Activated CD4-positive, alpha-beta memory T cell treated with anti-CD3 and anti-CD28 coated beads, Interleukin-2, amount 10 ng/mL, durations not matched to agents 7 days and 5 days (primary cell): ENCODE measurements at regions of chr16 and their contacts with region 1.

Region 1: DNA sequence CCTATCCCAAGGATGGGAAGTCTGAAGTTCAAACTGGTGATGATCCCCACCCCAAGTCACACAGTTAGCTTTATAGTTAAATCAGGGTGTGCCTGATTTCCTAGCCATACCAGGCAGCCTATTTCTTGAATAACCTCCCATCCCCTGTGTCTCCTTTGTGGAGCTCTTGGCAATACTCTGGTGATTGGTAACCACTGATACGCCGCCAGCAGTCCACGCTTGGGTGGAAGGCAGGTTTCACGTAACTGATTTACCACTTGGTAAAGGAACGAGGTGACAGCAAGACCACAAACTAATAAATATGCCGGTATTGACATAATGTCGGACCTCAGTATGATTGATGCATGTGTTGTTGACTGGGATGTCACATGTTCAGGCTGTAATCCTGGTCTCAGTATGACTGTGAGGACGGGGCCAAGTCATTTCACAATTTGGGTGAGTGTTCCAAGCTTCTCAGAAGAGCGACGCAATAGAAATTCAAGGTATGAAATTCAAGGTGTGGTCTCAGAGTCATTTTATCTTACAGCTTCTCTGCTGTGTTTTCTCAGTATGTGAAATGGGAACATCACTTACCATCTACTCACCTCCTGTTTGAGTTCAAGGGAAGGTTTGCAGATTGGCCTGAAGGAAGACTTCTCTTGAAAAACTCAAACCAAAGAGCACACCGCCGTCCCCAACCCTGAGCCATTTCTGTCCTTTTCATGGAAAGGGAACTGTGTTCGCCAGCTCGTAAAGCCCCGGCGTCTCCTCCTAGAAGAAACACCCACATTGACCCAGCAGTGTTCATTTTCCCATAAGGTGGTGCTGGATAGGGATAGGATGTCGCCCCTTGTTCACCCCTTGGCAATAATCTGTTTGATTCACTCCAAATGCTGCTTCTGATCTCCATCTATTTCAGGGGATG is 678.9 kb downstream of the WWOX start:
- DNase-seq: peak; percentile 84
- H3K4me3 Mint-ChIP-seq: peak overlapping the region; percentile 58
- H3K27ac Mint-ChIP-seq: peak overlapping the region; percentile 98
- H3K4me1 Mint-ChIP-seq: peaks cover 95% of the 10 kb centered on the region
- H3K27me3 Mint-ChIP-seq: no peaks in the 10 kb centered on the region

Region 2: GRCh38 chr16:78684040-78684611 is 94.2 kb before region 1 on chr16:
- CTCF ChIA-PET with region 1: no interaction called
- POLR2A ChIA-PET with region 1: no interaction called
- DNase-seq: no peak
- H3K4me3 Mint-ChIP-seq: no peak overlapping the region
- H3K27ac Mint-ChIP-seq: no peak overlapping the region
- H3K4me1 Mint-ChIP-seq: no peaks in the 10 kb centered on the region
- H3K27me3 Mint-ChIP-seq: no peaks in the 10 kb centered on the region

Region 3: DNA sequence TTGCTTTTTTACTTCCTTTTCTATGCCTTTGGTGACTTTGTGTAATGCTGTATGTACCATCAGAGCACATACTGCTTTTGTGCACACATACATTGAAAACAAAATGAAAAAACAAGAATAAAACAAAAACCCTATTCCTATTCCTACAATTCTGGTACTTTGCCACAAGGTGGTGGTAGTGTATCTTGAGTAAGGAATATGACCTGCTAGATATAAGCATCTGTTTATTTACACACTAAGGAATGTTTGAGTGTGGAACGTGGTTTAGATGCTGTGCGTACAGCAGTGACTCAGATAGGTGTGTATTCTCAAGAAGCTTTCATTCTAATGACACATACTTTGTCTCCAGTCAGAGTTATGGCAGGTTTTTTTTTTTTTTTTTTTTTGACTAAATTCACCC is 72.7 kb before region 1 on chr16:
- CTCF ChIA-PET with region 1: interaction called, 50 read pairs
- POLR2A ChIA-PET with region 1: interaction called, 6 read pairs
- DNase-seq: peak; percentile 27
- H3K4me3 Mint-ChIP-seq: no peak overlapping the region
- H3K27ac Mint-ChIP-seq: peak overlapping the region; percentile 41
- H3K4me1 Mint-ChIP-seq: peaks cover 13% of the 10 kb centered on the region
- H3K27me3 Mint-ChIP-seq: no peaks in the 10 kb centered on the region

Region 4: DNA sequence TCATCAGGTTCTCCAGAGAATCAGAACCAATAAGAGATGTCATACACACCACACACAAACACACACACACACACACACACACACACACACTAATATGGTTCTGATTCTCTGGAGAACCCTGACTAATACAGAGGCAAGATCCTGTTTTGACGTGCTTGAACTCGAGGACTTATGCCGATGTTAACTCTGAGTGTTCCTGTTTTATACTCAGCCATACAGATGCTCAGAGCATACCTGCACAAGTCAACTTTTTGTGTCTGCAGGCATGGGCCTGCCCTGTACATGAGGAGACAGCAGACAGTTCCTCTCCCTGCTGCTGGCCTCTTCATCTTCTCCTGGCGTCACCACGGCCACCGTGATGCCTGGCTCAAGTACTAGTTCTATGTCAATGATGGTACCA is 43.0 kb before region 1 on chr16:
- CTCF ChIA-PET with region 1: no interaction called
- POLR2A ChIA-PET with region 1: no interaction called
- DNase-seq: no peak
- H3K4me3 Mint-ChIP-seq: no peak overlapping the region
- H3K27ac Mint-ChIP-seq: no peak overlapping the region
- H3K4me1 Mint-ChIP-seq: peaks cover 6% of the 10 kb centered on the region
- H3K27me3 Mint-ChIP-seq: no peaks in the 10 kb centered on the region

Region 5: GRCh38 chr16:78749745-78750268 is 28.5 kb before region 1 on chr16:
- CTCF ChIA-PET with region 1: no interaction called
- POLR2A ChIA-PET with region 1: interaction called, 11 read pairs
- DNase-seq: no peak
- H3K4me3 Mint-ChIP-seq: peak overlapping the region; percentile 11
- H3K27ac Mint-ChIP-seq: peak overlapping the region; percentile 63
- H3K4me1 Mint-ChIP-seq: peaks cover 27% of the 10 kb centered on the region
- H3K27me3 Mint-ChIP-seq: no peaks in the 10 kb centered on the region

Region 6: DNA sequence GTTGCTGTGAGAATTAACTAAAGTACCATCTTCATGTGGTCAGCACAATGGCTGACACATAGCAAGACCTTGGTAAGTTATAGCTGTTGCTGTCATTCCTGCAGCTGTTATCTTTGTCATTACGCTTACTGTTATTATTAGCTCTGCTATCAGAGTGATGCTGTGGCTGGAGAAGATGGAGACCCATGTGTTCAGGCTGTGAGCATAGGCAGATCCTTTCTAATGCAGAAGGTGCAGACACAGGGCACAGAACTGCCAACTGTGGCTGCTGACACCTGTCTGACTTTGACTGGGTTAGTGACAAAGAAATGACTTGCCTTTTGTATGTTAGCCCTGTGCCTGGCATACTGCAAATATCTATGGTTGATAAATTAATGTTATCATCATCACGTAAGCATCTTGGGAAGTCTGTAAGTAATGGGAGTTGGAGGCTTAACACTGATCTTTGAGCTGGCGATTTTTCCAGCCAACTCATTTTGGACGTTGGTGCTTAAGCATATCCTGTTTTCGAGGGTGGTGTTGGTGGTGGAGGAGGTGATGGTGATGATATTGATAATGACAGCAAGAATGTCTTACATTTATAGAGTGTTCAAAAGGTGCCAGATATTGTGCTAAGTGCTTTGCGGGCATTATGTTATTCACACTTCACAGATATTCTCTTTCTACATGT is 16.4 kb after region 1 on chr16:
- CTCF ChIA-PET with region 1: interaction called, 10 read pairs
- POLR2A ChIA-PET with region 1: interaction called, 66 read pairs
- DNase-seq: peak; percentile 46
- H3K4me3 Mint-ChIP-seq: peak overlapping the region; percentile 2
- H3K27ac Mint-ChIP-seq: peak overlapping the region; percentile 85
- H3K4me1 Mint-ChIP-seq: peaks cover 64% of the 10 kb centered on the region
- H3K27me3 Mint-ChIP-seq: no peaks in the 10 kb centered on the region

Region 7: GRCh38 chr16:78892951-78893733 is 114.8 kb after region 1 on chr16:
- CTCF ChIA-PET with region 1: interaction called, 4 read pairs
- POLR2A ChIA-PET with region 1: interaction called, 121 read pairs
- DNase-seq: no peak
- H3K4me3 Mint-ChIP-seq: no peak overlapping the region
- H3K27ac Mint-ChIP-seq: peak overlapping the region; percentile 85
- H3K4me1 Mint-ChIP-seq: peaks cover 91% of the 10 kb centered on the region
- H3K27me3 Mint-ChIP-seq: no peaks in the 10 kb centered on the region

Region 8: GRCh38 chr16:78925083-78925767 is 146.9 kb after region 1 on chr16:
- CTCF ChIA-PET with region 1: no interaction called
- POLR2A ChIA-PET with region 1: no interaction called
- DNase-seq: peak; percentile 29
- H3K4me3 Mint-ChIP-seq: no peak overlapping the region
- H3K27ac Mint-ChIP-seq: no peak overlapping the region
- H3K4me1 Mint-ChIP-seq: peaks cover 11% of the 10 kb centered on the region
- H3K27me3 Mint-ChIP-seq: no peaks in the 10 kb centered on the region

Region 9: GRCh38 chr16:78962457-78962929 is 184.1 kb after region 1 on chr16:
- CTCF ChIA-PET with region 1: no interaction called
- POLR2A ChIA-PET with region 1: interaction called, 16 read pairs
- DNase-seq: no peak
- H3K4me3 Mint-ChIP-seq: no peak overlapping the region
- H3K27ac Mint-ChIP-seq: peak overlapping the region; percentile 81
- H3K4me1 Mint-ChIP-seq: peaks cover 60% of the 10 kb centered on the region
- H3K27me3 Mint-ChIP-seq: no peaks in the 10 kb centered on the region

Region 10: DNA sequence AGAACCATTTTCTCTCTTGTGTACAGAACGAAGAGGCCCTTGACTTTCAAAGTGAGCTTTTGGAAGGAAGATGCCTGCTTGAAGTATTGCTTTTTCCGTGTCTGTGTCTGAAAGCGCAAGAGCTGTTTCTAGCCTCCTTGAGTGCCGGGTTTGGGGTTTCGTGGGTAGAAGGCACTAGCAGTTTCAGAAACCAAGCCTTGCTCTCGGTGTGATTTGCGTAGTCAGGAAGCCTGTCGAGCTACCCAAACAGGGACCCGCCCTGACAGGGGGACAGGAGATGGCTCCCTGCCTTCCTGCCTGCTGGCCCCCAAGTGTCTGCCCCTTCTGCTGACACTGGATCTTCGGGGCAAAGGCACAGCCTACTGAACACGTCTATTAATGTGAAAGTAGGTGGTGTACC is 500.2 kb after region 1 on chr16:
- CTCF ChIA-PET with region 1: no interaction called
- POLR2A ChIA-PET with region 1: interaction called, 19 read pairs
- DNase-seq: peak; percentile 85
- H3K4me3 Mint-ChIP-seq: peak overlapping the region; percentile 65
- H3K27ac Mint-ChIP-seq: peak overlapping the region; percentile 92
- H3K4me1 Mint-ChIP-seq: peaks cover 85% of the 10 kb centered on the region
- H3K27me3 Mint-ChIP-seq: no peaks in the 10 kb centered on the region